Aorta (tissue), 5 donors: ENCODE measurements at regions of chr3 and their contacts with region 1.

Region 1: GRCh38 chr3:69739204-69740102 is at the start of gene MITF:
- DNase-seq: peak; percentile 96 to 97
- ATAC-seq: peak; percentile 99
- H3K4me3 ChIP-seq: peak within 1 kb of the TSS; percentile 81 to 93
- H3K27ac ChIP-seq: peak within 1 kb of the TSS in 1 of 2 donors; percentile 49
- H3K4me1 ChIP-seq: peaks cover 0 to 4% of the 10 kb centered on the region in 2 donors
- H3K27me3 ChIP-seq: no peaks in the 10 kb centered on the region
- total RNA-seq, gene MITF: 28.4 to 30.5 TPM

Region 2: GRCh38 chr3:69784954-69785514 is 45.6 kb after region 1 on chr3:
- intact Hi-C with region 1: loop called (anchors 5 kb)
- DNase-seq: peak; percentile 82 to 86
- ATAC-seq: peak; percentile 89
- H3K4me3 ChIP-seq: no peak overlapping the region
- H3K27ac ChIP-seq: no peak overlapping the region
- H3K4me1 ChIP-seq: peaks cover 0 to 2% of the 10 kb centered on the region in 2 donors
- H3K27me3 ChIP-seq: no peaks in the 10 kb centered on the region